ENCODE measurements at regions of chr5 and their contacts with region 1.

Region 1: GRCh38 chr5:141878711-141879425 is 658 bp upstream of the PCDH1 start:
- DNase-seq: peak; percentile 91
- ATAC-seq: peak; percentile 87 to 88

Region 2: GRCh38 chr5:141686648-141687416 is 192.0 kb before region 1 on chr5:
- intact Hi-C with region 1: loop called in 1 of 2 experiments (anchors 5 kb)
- DNase-seq: no peak
- ATAC-seq: no peak

Region 3: GRCh38 chr5:141701360-141702119 is 177.3 kb before region 1 on chr5:
- intact Hi-C with region 1: loop called (anchors 1 to 5 kb)
- DNase-seq: no peak
- ATAC-seq: no peak

Region 4: GRCh38 chr5:141811287-141812155 is 67.3 kb before region 1 on chr5:
- intact Hi-C with region 1: loop called in 1 of 2 experiments (anchors 5 kb)
- DNase-seq: peak; percentile 35
- ATAC-seq: peak in 1 of 2 donors; percentile 24

Region 5: GRCh38 chr5:141951332-141951781 is 72.5 kb after region 1 on chr5:
- intact Hi-C with region 1: loop called (anchors 5 to 10 kb)
- DNase-seq: no peak
- ATAC-seq: peak; percentile 15 to 43

Region 6: DNA sequence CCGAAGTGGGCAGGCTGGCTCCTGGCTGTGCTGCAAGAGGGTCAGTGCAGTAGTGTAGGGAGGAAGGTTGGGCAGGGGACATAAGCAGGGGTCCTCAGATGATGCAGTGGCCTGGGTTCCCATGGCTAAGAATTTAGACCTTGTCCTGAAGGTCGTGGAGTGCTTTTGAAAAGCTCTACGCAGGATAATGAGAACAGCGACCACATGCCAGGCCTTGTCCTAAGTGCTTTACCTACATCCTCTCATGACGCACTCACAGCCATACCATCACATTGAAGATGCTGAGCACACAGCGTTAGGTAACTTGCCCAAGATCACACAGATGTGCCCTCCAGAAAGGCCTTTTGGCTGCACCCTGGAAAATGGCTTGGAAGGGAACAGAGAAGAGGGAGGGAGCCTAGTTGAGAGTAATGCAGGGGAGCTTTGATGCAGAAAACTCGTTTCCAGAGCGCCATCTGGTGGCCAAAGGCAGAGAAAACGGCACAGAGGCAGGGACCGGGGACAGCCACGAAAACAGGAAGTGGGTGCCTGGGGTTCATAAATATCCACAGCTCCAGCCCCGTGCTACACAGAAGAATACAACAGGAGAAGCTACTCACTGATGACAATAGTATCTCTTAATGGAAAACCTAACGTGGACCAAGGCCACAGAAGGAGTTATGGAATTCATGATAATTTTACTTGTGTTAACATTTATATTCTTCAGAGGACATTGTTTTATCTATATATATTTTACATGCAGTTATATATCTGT is 81.8 kb after region 1 on chr5:
- intact Hi-C with region 1: loop called (anchors 5 to 10 kb)
- DNase-seq: peak; percentile 90
- ATAC-seq: peak; percentile 84 to 92